ENCODE measurements at regions of chr18 and their contacts with region 1.

Region 1: DNA sequence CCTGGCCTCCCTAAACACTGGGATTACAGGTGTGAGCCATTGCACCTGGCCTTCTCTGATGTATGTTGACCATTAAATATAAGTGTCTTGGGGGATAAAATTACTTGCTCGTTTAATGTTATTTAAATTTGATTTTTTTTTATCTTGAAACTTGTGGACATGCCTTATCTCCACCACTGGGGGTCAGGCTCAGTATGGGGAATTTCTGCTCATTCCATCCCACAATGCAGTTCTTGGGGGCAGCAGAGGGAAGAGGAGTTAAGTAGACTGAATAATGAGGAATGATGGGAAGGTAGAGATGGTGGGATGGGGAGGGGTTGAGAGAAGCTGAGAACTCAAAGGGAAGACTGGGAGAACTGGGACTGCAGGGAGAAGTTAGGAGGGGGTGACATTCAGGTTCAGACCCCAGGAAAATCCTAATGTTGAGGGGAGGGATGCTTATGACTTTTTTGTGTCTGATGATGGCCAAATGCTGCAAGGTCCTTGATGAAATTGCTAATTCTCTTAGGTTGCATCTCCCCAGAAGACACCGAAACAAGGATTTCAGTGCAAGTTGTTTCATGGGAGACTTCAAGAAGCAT is 174.2 kb downstream of the MIB1 start:
- DNase-seq: peak; percentile 59
- ATAC-seq: peak; percentile 95
- H3K4me3 ChIP-seq: no peak overlapping the region
- H3K27ac ChIP-seq: no peak overlapping the region
- H3K4me1 ChIP-seq: no peaks in the 10 kb centered on the region
- H3K27me3 ChIP-seq: no peaks in the 10 kb centered on the region
- CTCF ChIP-seq: peak; percentile 67 to 92 (median 80)
- POLR2A ChIP-seq: no peak
- RAD21 ChIP-seq: peak; percentile 90

Region 2: DNA sequence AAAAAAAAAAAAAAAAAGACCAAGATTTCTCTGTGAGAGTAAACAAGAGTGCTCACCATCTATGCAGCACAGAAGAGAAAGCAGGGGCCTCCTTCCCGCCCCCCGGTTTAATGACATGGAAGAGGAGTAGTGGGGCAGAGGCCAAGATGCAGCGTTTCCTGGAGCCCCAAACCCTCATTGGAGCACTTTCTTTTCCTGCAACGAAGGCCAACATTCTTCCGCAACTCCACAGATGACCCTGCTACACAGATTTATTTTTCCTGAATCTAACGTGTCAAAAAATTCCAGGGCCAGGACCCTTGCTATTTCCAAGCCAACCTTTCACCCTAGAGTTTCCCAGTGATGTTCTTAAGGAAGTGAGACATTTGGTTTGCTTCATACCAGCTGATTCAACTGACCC is 15.3 kb after region 1 on chr18:
- CTCF ChIA-PET with region 1: no interaction called
- POLR2A ChIA-PET with region 1: no interaction called
- RAD21 ChIA-PET with region 1: no interaction called
- intact Hi-C with region 1: no loop called
- DNase-seq: no peak
- ATAC-seq: no peak
- H3K4me3 ChIP-seq: no peak overlapping the region
- H3K27ac ChIP-seq: no peak overlapping the region
- H3K4me1 ChIP-seq: no peaks in the 10 kb centered on the region
- H3K27me3 ChIP-seq: no peaks in the 10 kb centered on the region
- CTCF ChIP-seq: no peak
- POLR2A ChIP-seq: no peak
- RAD21 ChIP-seq: no peak

Region 3: GRCh38 chr18:22052405-22053105 is 137.7 kb after region 1 on chr18:
- CTCF ChIA-PET with region 1: no interaction called
- POLR2A ChIA-PET with region 1: no interaction called
- RAD21 ChIA-PET with region 1: no interaction called
- intact Hi-C with region 1: no loop called
- DNase-seq: no peak
- ATAC-seq: no peak
- H3K4me3 ChIP-seq: no peak overlapping the region
- H3K27ac ChIP-seq: no peak overlapping the region
- H3K4me1 ChIP-seq: no peaks in the 10 kb centered on the region
- H3K27me3 ChIP-seq: no peaks in the 10 kb centered on the region
- CTCF ChIP-seq: no peak
- POLR2A ChIP-seq: no peak
- RAD21 ChIP-seq: no peak

Region 4: DNA sequence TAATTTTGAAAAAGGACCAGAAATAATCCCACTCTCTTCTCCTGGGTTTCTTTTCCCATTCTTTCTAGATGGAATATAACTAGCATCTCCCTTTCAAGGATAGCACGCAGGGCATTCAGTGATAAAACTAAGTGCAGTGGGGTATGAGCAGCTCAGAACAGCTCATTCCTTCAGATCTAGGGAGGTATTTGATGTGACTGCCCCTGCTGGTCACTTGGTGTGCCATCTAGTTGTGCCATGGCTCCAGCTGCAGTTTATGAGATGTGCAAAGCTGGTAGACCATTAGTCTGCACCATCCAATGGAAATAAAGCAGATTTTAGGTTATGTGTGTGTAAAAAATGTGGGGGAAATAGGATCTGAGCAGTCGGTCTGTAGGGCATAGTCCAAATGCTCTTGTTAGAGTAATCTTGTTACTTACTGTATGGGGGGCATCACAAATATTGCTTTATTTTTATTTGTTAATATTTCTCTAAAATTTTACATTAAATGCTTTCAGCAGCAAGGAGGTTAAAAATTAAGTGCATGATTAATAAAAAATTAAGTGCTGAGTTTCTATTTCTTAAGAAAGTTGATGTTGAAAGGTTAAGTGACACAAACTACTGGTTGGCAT is 463.9 kb after region 1 on chr18:
- CTCF ChIA-PET with region 1: no interaction called
- POLR2A ChIA-PET with region 1: no interaction called
- RAD21 ChIA-PET with region 1: no interaction called
- intact Hi-C with region 1: loop called (anchors 10 kb)
- DNase-seq: peak; percentile 39
- ATAC-seq: peak; percentile 100
- H3K4me3 ChIP-seq: no peak overlapping the region
- H3K27ac ChIP-seq: no peak overlapping the region
- H3K4me1 ChIP-seq: no peaks in the 10 kb centered on the region
- H3K27me3 ChIP-seq: no peaks in the 10 kb centered on the region
- CTCF ChIP-seq: peak; percentile 12 to 83 (median 77); a peak in 5 of 6 replicates
- POLR2A ChIP-seq: no peak
- RAD21 ChIP-seq: peak; percentile 46; the same call in 1 of the 2 replicates

Region 5: GRCh38 chr18:22703883-22704585 is 789.2 kb after region 1 on chr18:
- CTCF ChIA-PET with region 1: no interaction called
- POLR2A ChIA-PET with region 1: no interaction called
- RAD21 ChIA-PET with region 1: no interaction called
- intact Hi-C with region 1: loop called (anchors 5 kb)
- DNase-seq: peak; percentile 52
- ATAC-seq: peak; percentile 87
- H3K4me3 ChIP-seq: no peak overlapping the region
- H3K27ac ChIP-seq: no peak overlapping the region
- H3K4me1 ChIP-seq: peaks cover 0 to 6% of the 10 kb centered on the region in 2 experiments; a peak in 2 of 4 replicates
- H3K27me3 ChIP-seq: no peaks in the 10 kb centered on the region
- CTCF ChIP-seq: peak; percentile 53 to 85 (median 77); a peak in 5 of 6 replicates
- POLR2A ChIP-seq: no peak
- RAD21 ChIP-seq: peak; percentile 63